H1 (cell line): ENCODE measurements at regions of chr3 and their contacts with region 1.

Region 1: GRCh38 chr3:185070491-185071286 is 82.2 kb downstream of the C3orf70 start:
- DNase-seq: peak in 1 of 2 experiments; percentile 64
- H3K4me3 ChIP-seq: no peak overlapping the region
- H3K27ac ChIP-seq: no peak overlapping the region
- H3K4me1 ChIP-seq: peaks cover 0 to 12% (median 6%) of the 10 kb centered on the region in 4 experiments; a peak in 6 of 7 replicates
- H3K27me3 ChIP-seq: no peaks in the 10 kb centered on the region
- CTCF ChIP-seq: peak; percentile 67 to 80 (median 75)
- EP300 ChIP-seq: no peak
- POLR2A ChIP-seq: no peak
- RAD21 ChIP-seq: peak; percentile 59 to 70

Region 2: DNA sequence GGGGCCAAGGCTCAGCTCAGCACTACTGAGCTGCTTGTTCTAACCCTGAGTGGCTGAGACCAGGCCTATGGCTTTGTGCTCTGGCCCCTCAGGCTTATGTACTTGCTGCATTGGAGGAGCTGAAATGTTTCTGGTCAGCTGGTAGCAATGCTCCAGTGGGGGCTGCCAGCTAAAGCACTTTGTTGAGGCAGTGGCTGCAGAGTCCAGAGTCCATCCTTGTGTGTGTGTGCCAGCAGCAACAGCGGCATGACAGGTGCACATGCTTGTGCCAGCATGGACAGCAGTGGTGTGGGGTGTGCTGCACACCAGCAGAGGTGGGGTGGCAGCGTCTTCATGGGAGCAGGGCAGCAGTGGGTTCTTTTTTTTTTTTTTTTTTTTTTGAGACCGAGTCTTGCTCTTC is 89.6 kb before region 1 on chr3:
- CTCF ChIA-PET with region 1: no interaction called
- POLR2A ChIA-PET with region 1: no interaction called
- DNase-seq: no peak
- H3K4me3 ChIP-seq: no peak overlapping the region
- H3K27ac ChIP-seq: no peak overlapping the region
- H3K4me1 ChIP-seq: no peaks in the 10 kb centered on the region
- H3K27me3 ChIP-seq: no peaks in the 10 kb centered on the region
- CTCF ChIP-seq: no peak
- EP300 ChIP-seq: no peak
- POLR2A ChIP-seq: no peak
- RAD21 ChIP-seq: no peak

Region 3: GRCh38 chr3:185041540-185041939 is 29.1 kb before region 1 on chr3:
- CTCF ChIA-PET with region 1: interaction called, 97 read pairs
- POLR2A ChIA-PET with region 1: interaction called, 3 read pairs
- DNase-seq: no peak
- H3K4me3 ChIP-seq: no peak overlapping the region
- H3K27ac ChIP-seq: no peak overlapping the region
- H3K4me1 ChIP-seq: peaks cover 0 to 4% (median 0%) of the 10 kb centered on the region in 4 experiments; a peak in 1 of 7 replicates
- H3K27me3 ChIP-seq: no peaks in the 10 kb centered on the region
- CTCF ChIP-seq: no peak
- EP300 ChIP-seq: no peak
- POLR2A ChIP-seq: no peak
- RAD21 ChIP-seq: no peak

Region 4: DNA sequence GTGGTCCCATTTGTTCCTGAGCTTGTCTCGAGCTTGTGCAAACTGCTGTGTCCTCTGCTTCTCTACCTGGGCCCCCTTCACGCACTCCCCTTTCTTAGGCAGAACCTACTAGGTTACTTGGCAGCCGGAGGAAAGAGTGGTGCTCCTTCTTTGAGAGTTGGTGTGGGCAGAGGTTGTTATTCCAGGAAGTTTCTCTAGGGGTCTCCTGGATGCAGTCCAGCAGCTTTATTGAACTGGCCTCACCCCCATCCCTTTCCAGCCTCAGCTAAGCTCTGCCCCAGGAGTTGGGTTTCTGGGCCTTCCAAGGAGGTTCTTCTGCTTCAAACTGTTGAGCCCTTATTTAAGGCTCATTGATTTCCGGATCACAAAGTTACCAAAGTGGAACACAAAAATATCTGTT is 21.0 kb before region 1 on chr3:
- CTCF ChIA-PET with region 1: interaction called, 97 read pairs
- POLR2A ChIA-PET with region 1: no interaction called
- DNase-seq: no peak
- H3K4me3 ChIP-seq: no peak overlapping the region
- H3K27ac ChIP-seq: no peak overlapping the region
- H3K4me1 ChIP-seq: peaks cover 0 to 4% (median 1%) of the 10 kb centered on the region in 4 experiments; a peak in 2 of 7 replicates
- H3K27me3 ChIP-seq: no peaks in the 10 kb centered on the region
- CTCF ChIP-seq: peak in 2 of 3 experiments; percentile 54 to 57; a peak in 3 of 4 replicates
- EP300 ChIP-seq: no peak
- POLR2A ChIP-seq: no peak
- RAD21 ChIP-seq: peak; percentile 44 to 65

Region 5: DNA sequence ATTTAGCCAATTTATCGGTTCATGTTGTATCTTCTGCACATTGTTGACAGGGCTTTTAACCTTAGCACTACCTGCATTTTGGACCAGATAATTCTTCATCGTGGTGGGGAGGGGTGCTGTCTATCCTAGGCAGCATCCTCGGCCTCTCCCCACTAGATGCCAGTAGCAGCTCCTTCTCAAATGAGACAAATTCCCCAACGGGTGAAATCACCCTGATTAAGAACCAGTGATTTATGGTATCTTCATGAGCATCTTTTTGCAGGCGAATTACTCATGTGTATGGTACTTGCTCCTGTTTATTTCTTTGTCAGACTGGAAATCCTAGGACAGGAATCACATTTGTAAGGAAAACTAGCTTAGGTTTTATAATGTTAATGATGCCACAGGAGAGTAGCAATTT is 14.2 kb after region 1 on chr3:
- CTCF ChIA-PET with region 1: interaction called, 20 read pairs
- POLR2A ChIA-PET with region 1: no interaction called
- DNase-seq: no peak
- H3K4me3 ChIP-seq: no peak overlapping the region
- H3K27ac ChIP-seq: no peak overlapping the region
- H3K4me1 ChIP-seq: peaks cover 0 to 5% (median 0%) of the 10 kb centered on the region in 4 experiments; a peak in 1 of 7 replicates
- H3K27me3 ChIP-seq: no peaks in the 10 kb centered on the region
- CTCF ChIP-seq: peak; percentile 2 to 38 (median 31); a peak in 3 of 4 replicates
- EP300 ChIP-seq: no peak
- POLR2A ChIP-seq: no peak
- RAD21 ChIP-seq: peak; percentile 45 to 61

Region 6: DNA sequence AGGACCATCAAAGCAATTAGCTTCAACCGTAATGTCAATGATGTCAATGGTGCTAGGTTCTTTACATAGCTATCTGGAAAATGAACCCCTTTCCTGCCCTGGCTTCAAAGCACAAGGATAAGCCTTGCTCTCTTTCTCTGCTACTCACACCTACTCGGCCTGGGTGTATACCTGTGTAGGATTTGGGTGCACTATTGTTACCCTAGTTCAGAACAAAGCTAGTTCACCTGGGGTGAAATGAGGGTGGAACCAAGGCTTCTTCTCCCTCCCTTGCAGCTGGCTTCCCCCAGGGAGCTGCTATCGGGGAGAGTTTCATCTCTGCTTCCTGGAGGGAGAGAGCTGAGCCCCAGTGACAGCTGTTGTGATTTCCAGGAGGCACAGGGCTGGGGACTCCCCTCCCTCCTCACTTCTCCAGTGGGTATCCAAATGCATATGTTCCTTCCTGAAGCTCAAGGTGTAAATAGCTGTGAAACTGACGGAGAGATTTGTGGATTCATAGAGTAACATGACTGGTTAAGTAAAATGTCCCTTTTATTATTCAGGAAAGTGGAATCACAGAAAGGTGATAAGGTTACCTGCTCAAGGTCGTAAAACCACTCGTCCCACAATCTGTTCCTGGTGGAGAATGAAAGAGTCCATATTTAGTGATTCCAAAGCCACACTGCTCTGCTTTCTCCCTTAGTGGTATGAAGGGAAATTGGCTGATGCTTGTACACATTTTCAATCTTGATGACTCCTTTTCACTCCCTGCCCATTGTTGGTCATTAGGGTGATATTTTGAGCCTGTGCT is 93.9 kb after region 1 on chr3:
- CTCF ChIA-PET with region 1: interaction called, 17 read pairs
- POLR2A ChIA-PET with region 1: no interaction called
- DNase-seq: no peak
- H3K4me3 ChIP-seq: no peak overlapping the region; a peak in 1 of 8 replicates
- H3K27ac ChIP-seq: no peak overlapping the region
- H3K4me1 ChIP-seq: 0 out of 7 replicates have a peak, but pooled peaks cover 0 to 2% (median 0%) of the 10 kb centered on the region in 4 experiments
- H3K27me3 ChIP-seq: peaks cover 0 to 2% (median 0%) of the 10 kb centered on the region in 4 experiments; a peak in 1 of 7 replicates
- CTCF ChIP-seq: no peak
- EP300 ChIP-seq: no peak
- POLR2A ChIP-seq: no peak
- RAD21 ChIP-seq: no peak

Region 7: GRCh38 chr3:185270262-185270955 is 199.7 kb after region 1 on chr3:
- CTCF ChIA-PET with region 1: interaction called, 18 read pairs
- POLR2A ChIA-PET with region 1: no interaction called
- DNase-seq: peak in 1 of 2 experiments; percentile 55
- H3K4me3 ChIP-seq: no peak overlapping the region
- H3K27ac ChIP-seq: no peak overlapping the region
- H3K4me1 ChIP-seq: no peaks in the 10 kb centered on the region
- H3K27me3 ChIP-seq: no peaks in the 10 kb centered on the region
- CTCF ChIP-seq: peak; percentile 78 to 84 (median 81)
- EP300 ChIP-seq: no peak
- POLR2A ChIP-seq: no peak
- RAD21 ChIP-seq: peak; percentile 80 to 82